Activated CD4-positive, alpha-beta T cell treated with anti-CD3 and anti-CD28 coated beads for 36 hours (primary cell): ENCODE measurements at regions of chr3 and their contacts with region 1.

Region 1: DNA sequence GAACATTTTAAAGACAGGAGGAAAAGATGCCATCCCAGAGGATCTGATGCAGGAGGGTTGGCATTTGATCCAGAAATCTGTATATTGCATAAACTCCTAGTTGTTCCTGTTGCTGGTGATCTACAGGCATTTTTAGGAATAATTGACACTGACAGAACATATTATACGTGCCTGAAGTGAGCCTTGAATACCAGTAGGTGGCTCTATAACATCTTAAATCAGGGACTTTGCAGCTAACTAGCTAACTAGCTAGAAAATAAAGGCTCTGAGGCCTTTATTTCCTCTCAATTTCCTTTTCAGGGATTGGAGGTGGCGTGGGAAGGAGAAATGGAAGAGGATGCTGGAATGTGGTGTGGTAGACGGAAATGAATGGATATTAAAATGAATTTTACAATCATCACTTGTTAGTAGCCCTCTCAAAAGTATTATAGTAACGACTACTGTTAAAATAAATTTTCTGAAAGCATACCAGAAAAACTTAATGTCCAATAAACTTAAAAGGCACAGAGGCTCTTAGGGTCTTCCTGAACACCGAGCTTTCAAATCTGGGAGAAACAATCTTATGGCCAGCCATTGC is 73.9 kb upstream of the ZBED2 start:
- DNase-seq: no peak
- ATAC-seq: peak; percentile 39
- H3K4me3 Mint-ChIP-seq: peak overlapping the region; percentile 26
- H3K27ac Mint-ChIP-seq: peak overlapping the region; percentile 75
- H3K4me1 Mint-ChIP-seq: peaks cover 79% of the 10 kb centered on the region
- H3K27me3 Mint-ChIP-seq: no peaks in the 10 kb centered on the region

Region 2: GRCh38 chr3:111035893-111036292 is 633.1 kb before region 1 on chr3:
- CTCF ChIA-PET with region 1: no interaction called
- POLR2A ChIA-PET with region 1: no interaction called
- intact Hi-C with region 1: no loop called
- DNase-seq: no peak
- ATAC-seq: no peak
- H3K4me3 Mint-ChIP-seq: no peak overlapping the region
- H3K27ac Mint-ChIP-seq: no peak overlapping the region
- H3K4me1 Mint-ChIP-seq: no peaks in the 10 kb centered on the region
- H3K27me3 Mint-ChIP-seq: peaks cover 2% of the 10 kb centered on the region

Region 3: GRCh38 chr3:111577794-111578685 is 91.0 kb before region 1 on chr3:
- CTCF ChIA-PET with region 1: interaction called, 30 read pairs
- POLR2A ChIA-PET with region 1: interaction called, 3 read pairs
- intact Hi-C with region 1: loop called (anchors 1 to 5 kb)
- DNase-seq: no peak
- ATAC-seq: peak; percentile 84
- H3K4me3 Mint-ChIP-seq: no peak overlapping the region
- H3K27ac Mint-ChIP-seq: peak overlapping the region; percentile 72
- H3K4me1 Mint-ChIP-seq: peaks cover 75% of the 10 kb centered on the region
- H3K27me3 Mint-ChIP-seq: no peaks in the 10 kb centered on the region

Region 4: DNA sequence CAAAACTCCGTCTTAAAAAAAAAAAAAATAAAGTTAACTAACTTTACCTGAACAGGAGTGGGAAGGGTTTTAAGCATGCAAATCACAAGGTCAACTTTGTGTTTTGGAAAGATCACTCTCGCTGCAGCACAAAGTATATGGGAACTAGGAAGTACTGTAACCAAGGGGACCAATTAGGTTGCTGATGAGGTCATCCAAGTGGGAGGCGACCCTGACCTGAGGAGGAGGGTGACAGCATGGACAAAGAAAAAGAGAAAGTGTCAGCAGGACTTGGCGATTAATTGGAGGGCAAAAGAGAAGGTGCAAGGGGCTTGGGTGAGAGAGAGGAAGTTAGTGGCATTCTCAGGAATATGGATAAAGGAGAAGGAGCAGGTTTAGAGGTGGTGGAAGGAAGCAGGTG is 15.6 kb after region 1 on chr3:
- CTCF ChIA-PET with region 1: interaction called, 26 read pairs
- POLR2A ChIA-PET with region 1: no interaction called
- intact Hi-C with region 1: no loop called
- DNase-seq: no peak
- ATAC-seq: no peak
- H3K4me3 Mint-ChIP-seq: no peak overlapping the region
- H3K27ac Mint-ChIP-seq: no peak overlapping the region
- H3K4me1 Mint-ChIP-seq: peaks cover 45% of the 10 kb centered on the region
- H3K27me3 Mint-ChIP-seq: no peaks in the 10 kb centered on the region

Region 5: DNA sequence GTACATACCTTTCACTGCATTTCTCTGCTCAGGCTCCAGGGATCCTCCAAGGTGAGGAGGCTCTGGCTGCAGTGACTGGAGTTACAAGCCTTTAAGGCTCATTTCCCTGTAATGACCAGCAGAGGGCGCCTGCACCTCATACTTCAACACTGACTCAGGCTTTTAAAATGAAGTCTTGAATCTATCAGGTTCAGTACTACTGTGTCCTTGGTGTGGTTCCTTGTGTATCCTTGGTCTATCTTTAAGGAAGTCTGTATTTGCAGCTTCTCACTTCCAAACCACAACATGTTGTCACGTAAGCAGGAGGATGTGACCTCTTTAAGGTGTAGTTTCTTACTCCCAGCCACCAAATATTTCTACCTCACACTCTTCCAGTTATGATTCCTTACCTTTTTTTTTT is 48.6 kb after region 1 on chr3:
- CTCF ChIA-PET with region 1: interaction called, 3 read pairs
- POLR2A ChIA-PET with region 1: no interaction called
- intact Hi-C with region 1: loop called (anchors 1 kb)
- DNase-seq: peak; percentile 82
- ATAC-seq: peak; percentile 96
- H3K4me3 Mint-ChIP-seq: no peak overlapping the region
- H3K27ac Mint-ChIP-seq: no peak overlapping the region
- H3K4me1 Mint-ChIP-seq: peaks cover 4% of the 10 kb centered on the region
- H3K27me3 Mint-ChIP-seq: no peaks in the 10 kb centered on the region

Region 6: GRCh38 chr3:111967651-111968274 is 298.8 kb after region 1 on chr3:
- CTCF ChIA-PET with region 1: interaction called, 70 read pairs
- POLR2A ChIA-PET with region 1: no interaction called
- intact Hi-C with region 1: loop called (anchors 1 kb)
- DNase-seq: peak; percentile 90
- ATAC-seq: peak; percentile 85
- H3K4me3 Mint-ChIP-seq: no peak overlapping the region
- H3K27ac Mint-ChIP-seq: no peak overlapping the region
- H3K4me1 Mint-ChIP-seq: peaks cover 28% of the 10 kb centered on the region
- H3K27me3 Mint-ChIP-seq: no peaks in the 10 kb centered on the region

Region 7: DNA sequence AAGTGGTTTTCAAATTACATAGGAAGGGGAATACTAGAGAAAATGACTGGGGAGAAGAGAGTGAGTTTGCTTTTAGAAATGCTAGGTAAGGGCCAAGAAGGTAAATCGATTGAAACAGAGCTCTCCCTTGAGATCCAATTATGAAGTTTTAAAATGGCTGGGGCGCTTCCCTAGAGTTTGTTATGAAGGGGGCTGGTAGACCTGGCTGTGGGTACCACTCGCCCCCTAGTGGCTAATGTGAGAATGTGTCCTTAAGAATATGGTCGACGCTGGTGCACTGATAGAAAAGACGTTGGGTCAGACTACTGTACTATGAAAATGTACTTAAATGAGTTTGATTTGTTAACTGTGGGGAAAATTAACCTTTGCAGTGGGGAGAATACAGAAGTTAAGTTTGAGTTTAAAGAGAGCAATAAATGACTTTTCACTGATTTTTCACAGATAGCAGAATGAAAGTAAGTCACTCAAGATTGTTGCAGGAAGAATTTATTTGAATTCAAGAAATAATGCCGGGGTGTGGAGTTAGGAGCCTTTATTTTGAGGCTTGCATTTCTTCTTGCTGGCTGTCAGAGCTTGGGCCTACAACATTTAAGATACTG is 374.7 kb after region 1 on chr3:
- CTCF ChIA-PET with region 1: interaction called, 3 read pairs
- POLR2A ChIA-PET with region 1: no interaction called
- intact Hi-C with region 1: loop called in 1 of 2 experiments (anchors 1 kb)
- DNase-seq: peak; percentile 69
- ATAC-seq: peak; percentile 96
- H3K4me3 Mint-ChIP-seq: no peak overlapping the region
- H3K27ac Mint-ChIP-seq: no peak overlapping the region
- H3K4me1 Mint-ChIP-seq: peaks cover 4% of the 10 kb centered on the region
- H3K27me3 Mint-ChIP-seq: no peaks in the 10 kb centered on the region